ENCODE measurements at regions of chr1 and their contacts with region 1.

Region 1: GRCh38 chr1:207963427-207964194 is 52.7 kb upstream of the CD34 start:
- DNase-seq: peak; percentile 97

Region 2: DNA sequence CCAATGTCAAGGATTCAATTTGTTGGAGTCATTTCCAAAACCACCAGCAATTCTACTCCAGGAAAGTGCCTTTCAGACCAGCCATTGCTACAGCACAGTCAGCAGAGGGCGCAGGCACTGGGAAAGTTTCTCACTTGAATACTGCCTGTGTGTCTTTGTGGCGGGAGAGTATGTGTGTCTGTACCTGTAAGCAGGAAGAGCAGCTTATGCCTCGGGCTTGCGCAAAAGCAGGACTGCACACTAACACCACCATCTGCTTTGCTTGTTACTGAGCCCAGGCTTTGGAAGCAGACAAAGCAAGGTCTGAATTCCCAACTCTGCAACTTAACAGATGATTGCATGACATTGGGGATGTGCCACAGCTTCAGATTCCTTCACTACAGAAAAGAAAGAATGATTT is 1932.9 kb before region 1 on chr1:
- intact Hi-C with region 1: loop called in 1 of 2 experiments (anchors 10 kb)
- DNase-seq: peak; percentile 86

Region 3: GRCh38 chr1:207321079-207321789 is 642.4 kb before region 1 on chr1 and contains the start of gene CD55:
- intact Hi-C with region 1: loop called in 1 of 2 experiments (anchors 5 kb)
- DNase-seq: peak; percentile 99
- total RNA-seq, gene CD55: 52.7 to 53.2 TPM

Region 4: DNA sequence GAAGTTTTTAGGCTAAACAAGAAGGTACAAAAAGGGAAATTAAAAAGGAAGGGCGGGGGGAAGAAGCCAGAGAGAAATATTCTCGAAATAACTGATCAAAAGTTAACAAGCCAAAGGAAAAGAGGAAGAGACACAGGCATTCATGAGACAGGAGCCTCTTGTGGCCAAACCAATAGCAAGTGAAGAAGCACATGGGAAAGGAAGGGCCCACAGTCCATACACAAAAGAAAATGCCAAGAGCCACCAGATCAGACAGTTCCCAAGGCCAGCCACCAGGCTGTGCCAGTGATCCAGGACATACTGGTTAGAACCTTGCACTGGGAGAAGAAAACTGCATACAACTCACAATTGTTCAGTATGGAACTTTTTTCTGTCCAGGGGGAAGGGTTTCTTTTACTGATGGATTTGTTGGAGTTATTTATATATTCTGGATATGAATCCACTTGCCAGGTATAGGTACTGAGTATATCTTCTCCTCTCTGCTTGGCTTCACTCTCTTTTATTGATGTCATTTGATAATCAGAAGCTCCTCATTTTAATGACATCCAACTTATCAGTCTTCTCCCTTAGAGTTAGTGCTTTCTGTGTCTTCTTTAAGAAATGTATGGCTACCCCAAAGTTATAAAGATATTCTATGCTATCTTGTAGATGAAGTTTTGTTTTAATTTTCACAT is 135.0 kb before region 1 on chr1:
- intact Hi-C with region 1: loop called (anchors 5 to 10 kb)
- DNase-seq: peak; percentile 92

Region 5: GRCh38 chr1:207885129-207886032 is 78.2 kb before region 1 on chr1:
- intact Hi-C with region 1: loop called (anchors 5 kb)
- DNase-seq: peak; percentile 95

Region 6: DNA sequence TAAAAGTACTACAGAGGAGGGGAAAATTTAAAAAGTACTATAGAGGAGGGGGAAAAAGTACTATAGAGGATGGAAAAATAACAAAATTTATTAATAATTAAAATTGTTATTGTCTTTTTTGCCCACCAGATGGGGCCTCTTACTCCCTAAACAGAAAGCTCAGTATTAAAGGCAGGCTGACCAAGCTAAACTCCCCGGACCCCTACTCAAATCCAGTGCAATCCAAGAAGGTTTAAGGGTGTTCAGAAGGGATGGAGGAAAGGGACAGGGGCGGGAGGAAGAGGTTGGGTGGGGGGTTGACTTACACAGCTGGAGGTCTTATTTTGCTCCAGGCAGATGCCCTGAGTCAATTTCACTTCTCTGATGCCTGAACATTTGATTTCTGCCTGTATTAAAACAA is 66.4 kb before region 1 on chr1:
- intact Hi-C with region 1: loop called in 1 of 2 experiments (anchors 5 kb)
- DNase-seq: no peak

Region 7: DNA sequence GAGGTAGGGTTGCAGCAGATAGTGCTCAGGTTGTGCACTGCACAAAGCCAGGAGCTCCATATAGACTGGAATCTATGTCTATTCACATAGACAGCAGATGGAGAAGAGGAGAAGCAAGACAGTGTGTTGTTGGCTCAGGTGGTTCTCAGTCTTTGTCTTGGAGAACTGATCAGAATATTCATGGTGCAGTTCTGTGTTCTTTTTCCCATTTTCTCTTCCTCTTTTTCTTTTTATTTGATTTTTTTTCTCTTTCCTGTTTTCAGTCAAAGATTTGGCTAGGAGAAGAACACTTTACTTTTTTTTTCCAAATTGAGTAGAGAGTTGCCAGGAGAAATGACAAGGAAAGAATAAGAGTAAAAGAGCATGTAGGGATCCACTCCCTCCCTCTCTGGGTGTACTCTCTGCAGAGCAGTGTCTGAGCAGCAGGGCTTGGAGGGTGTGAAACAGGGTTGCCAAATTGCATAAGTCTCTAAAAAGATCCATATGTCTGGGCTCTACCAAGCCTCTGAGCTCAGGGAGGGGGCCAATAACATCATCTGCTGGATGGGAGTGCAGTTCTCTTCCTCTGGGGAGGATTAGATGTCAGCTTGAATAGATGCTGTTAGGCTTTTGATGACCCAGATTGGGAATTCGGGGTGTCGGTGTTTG is 44.0 kb before region 1 on chr1:
- intact Hi-C with region 1: no loop called
- DNase-seq: no peak